Sigmoid colon (tissue), 7 donors: ENCODE measurements at regions of chr5 and their contacts with region 1.

Region 1: GRCh38 chr5:131810510-131811249 is 13.9 kb upstream of the FNIP1 start:
- DNase-seq: no peak
- H3K4me3 ChIP-seq: no peak overlapping the region
- H3K27ac ChIP-seq: peak overlapping the region in 2 of 4 donors; percentile 15 to 35
- H3K4me1 ChIP-seq: peaks cover 0 to 12% (median 5%) of the 10 kb centered on the region in 4 donors
- H3K27me3 ChIP-seq: no peaks in the 10 kb centered on the region
- CTCF ChIP-seq: no peak
- EP300 ChIP-seq: no peak
- POLR2A ChIP-seq: no peak

Region 2: GRCh38 chr5:132007399-132008165 is 196.9 kb after region 1 on chr5:
- intact Hi-C with region 1: loop called (anchors 2 kb)
- DNase-seq: peak; percentile 81
- H3K4me3 ChIP-seq: no peak overlapping the region
- H3K27ac ChIP-seq: no peak overlapping the region
- H3K4me1 ChIP-seq: peaks cover 0 to 17% (median 15%) of the 10 kb centered on the region in 4 donors
- H3K27me3 ChIP-seq: peaks cover 3 to 17% (median 12%) of the 10 kb centered on the region in 3 donors
- CTCF ChIP-seq: peak; percentile 55 to 84 (median 73)
- EP300 ChIP-seq: no peak
- POLR2A ChIP-seq: no peak